AG04449 (cell line): ENCODE measurements at regions of chr1 and their contacts with region 1.

Region 1: DNA sequence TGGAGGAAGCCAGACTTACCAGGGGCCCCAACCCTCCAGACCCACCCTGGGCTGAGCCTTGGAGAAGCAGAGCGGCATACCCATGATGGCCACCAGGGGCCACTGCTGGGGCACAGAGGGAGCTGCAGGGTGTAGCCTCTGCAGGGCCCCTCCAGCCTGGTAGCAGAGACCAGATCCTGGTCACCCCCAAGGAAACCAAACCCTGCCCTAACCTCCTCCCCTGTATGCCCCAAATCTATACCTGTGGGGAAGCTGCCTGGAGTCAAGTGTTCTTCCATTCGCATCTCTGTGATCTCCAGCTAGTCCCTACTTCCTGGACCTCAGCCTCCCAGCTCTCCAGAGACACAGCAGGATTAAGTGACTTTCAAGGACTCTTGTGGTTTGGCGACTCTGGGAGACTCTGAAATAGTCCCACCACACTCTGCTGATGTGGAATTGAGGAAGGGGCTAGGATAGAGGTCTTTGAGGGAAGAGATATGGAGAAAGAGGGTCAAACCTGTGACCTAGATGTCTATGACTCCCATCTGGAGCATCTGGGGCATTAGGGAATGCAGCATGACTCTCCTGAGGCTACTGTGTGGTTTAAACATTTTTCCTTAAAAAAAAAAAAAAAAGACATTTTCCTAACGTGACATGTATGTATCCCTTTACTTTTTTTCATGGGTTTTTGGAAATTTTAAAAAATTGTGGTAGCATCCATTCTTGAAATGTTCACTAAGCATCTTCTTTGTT is 119.2 kb upstream of the IPO9 start:
- DNase-seq: no peak
- H3K4me3 ChIP-seq: no peak overlapping the region
- CTCF ChIP-seq: peak; percentile 92

Region 2: DNA sequence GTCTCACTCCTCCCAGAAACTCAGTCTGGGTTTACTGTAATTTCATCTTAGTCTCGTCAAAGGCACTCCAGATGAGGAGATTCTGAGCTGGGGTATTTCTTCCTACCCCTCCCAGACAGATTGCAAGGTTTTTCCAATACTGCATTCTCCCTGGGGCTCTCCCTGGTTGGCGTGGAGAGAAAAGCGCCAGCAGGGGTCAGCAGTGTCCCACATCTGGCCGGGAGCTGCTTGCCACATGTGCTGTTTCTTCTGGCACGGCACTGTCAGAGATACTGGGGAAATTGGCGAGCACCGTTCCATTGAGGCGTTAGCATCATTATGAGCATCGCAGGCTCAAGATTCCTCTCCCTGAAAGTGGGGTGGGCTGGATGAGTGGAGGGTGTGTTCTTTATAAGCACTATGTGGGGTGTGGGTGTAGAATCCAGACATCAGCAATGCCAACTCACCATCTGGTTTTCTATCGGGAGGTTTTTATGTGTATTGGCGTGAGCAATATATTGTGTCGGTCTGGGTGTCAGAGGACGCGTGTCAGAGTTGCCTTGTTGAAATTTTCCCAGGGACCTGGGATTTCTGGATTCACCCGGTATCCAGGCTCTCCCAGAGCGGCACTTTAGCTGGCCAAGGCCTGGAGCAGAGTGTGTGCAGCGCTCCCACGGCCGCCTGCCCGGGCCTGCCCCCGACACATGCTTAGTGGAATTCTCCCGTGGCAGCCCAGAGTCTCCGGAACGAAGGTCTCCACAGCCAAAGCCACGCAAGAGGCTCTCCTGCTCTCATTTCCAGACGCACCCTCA is 178.8 kb before region 1 on chr1:
- CTCF ChIA-PET with region 1: interaction called, 255 read pairs
- POLR2A ChIA-PET with region 1: interaction called, 3 read pairs
- DNase-seq: peak; percentile 40
- H3K4me3 ChIP-seq: no peak overlapping the region
- CTCF ChIP-seq: peak; percentile 87

Region 3: GRCh38 chr1:201655243-201655642 is 54.5 kb before region 1 on chr1:
- CTCF ChIA-PET with region 1: interaction called, 44 read pairs
- POLR2A ChIA-PET with region 1: interaction called, 4 read pairs
- DNase-seq: no peak
- H3K4me3 ChIP-seq: no peak overlapping the region
- CTCF ChIP-seq: peak; percentile 24

Region 4: DNA sequence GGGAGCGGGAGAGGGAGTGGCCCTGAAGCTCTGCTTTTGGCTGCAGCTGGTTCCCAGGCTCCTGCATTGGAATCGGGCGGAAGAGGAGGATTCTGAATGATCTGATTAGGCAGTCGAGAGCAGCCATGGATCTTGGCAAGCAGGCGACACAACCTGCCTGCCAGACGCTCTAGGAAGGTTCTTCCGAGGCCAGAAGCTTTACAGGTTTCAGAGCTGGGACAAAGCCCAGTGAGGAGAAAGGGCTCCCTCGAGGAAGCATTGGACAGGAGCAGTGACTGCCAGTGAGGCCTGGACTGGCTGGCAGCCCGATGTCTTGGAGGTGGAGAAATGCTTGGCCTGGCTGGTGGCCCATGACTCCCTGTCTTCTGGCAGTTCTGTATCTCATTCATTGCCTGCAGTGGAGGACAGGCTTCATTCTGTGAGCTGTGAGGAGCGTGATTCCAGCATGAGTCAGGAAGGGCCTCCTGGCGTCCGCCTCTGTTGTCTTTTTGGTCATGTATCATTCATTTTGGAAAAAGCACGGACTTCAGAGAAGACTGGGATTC is 13.4 kb before region 1 on chr1:
- CTCF ChIA-PET with region 1: interaction called, 44 read pairs
- POLR2A ChIA-PET with region 1: interaction called, 8 read pairs
- DNase-seq: peak; percentile 74
- H3K4me3 ChIP-seq: peak overlapping the region; percentile 9; the same call in 1 of the 2 replicates
- CTCF ChIP-seq: no peak

Region 5: DNA sequence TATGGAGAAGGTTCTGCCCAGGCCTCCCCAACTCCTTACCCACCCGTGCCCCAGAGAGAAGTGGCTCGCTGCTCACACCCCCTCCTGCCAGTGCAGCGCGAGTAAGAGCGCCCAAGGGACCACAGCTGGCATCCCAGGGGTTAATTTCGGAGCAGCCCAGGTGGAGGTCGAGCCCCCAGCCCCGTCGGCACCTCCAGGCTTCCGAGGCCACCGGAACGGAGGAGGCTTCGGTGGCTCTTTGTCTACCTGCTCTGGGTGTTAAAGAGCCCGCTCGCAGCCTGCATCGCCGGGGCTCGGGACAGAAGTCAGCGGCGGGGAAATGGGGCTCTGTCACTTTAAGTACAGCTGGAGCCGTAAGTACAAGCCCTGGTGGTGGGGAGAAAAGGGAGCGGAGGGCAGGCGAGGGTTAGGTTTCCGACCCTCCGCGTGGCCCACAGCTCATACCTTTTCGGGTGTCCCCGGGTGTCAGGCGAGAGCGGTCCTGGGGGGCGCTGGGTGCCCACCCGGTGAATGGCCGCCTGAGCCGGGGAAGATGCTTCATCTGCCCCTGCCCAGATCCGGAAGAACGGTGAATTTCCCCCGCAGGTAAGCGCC is 29.9 kb after region 1 on chr1:
- CTCF ChIA-PET with region 1: interaction called, 17 read pairs
- POLR2A ChIA-PET with region 1: interaction called, 9 read pairs
- DNase-seq: no peak
- H3K4me3 ChIP-seq: peak overlapping the region; percentile 76
- CTCF ChIP-seq: no peak

Region 6: GRCh38 chr1:201766131-201766866 is 56.6 kb after region 1 on chr1:
- CTCF ChIA-PET with region 1: interaction called, 20 read pairs
- POLR2A ChIA-PET with region 1: interaction called, 3 read pairs
- DNase-seq: peak; percentile 91
- H3K4me3 ChIP-seq: no peak overlapping the region
- CTCF ChIP-seq: no peak

Region 7: DNA sequence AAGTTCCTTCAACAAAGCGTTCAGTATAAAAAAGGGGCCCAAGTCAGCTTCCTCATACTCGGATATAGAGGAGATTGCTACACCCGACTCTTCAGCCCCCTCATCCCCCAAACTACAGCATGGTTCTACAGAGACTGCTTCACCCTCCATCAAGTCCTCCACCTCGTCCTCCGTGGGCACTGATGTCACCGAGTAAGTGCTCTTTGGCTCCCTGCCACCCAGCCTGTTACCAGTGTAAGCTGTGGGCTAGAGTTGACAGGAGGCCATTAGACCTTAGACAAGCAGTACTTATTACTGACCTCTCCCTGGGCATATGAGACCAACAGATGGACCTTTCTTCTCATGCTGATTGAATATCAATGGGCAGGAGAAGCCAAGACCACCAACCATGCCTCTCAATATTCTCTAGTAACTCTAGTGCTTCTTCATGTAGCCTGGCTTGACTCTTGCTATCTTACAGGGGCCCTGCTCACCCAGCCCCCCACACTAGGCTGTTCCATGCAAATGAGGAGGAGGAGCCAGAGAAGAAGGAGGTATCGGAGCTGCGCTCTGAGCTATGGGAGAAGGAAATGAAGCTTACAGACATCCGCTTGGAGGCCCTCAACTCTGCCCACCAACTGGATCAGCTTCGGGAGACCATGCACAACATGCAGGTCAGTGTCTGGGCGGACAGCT is 98.4 kb after region 1 on chr1:
- CTCF ChIA-PET with region 1: interaction called, 13 read pairs
- POLR2A ChIA-PET with region 1: no interaction called
- DNase-seq: no peak
- H3K4me3 ChIP-seq: no peak overlapping the region
- CTCF ChIP-seq: no peak